A549 (cell line): ENCODE measurements at regions of chr6 and their contacts with region 1.

Region 1: DNA sequence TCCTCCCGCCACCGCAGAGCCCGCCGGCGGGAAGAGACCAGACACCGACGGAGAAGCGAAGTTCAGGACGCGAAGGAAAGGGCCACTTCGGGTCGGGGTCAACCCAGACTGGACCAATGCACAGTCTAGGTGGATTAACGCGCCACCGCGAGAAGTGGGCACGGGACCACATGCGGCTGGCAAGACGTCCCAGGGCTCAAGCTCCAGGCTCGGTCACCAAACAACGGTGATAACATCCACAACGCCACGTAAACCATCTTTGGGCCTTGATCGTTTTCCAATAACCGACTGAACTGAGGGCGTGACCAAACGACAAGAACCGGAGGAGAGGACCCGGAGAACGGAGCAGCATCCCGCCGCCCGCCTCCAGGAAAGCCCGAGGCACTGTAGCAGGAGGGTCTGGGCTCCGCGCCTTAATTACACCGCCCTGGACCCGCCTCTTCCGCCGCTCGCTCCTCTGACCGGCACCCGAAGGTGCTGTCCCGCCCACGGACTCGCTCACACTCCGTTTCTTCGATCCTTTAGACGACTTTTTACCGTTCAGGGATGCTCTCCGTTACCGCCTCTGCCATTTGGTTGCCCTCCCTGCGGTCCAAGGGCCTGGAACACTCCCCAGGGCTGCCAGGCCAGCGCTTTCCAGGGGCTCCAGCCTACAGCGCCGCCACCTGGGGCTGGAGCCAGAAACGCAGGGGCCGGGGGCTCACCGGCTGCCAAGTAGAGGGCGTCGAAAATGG is 44.1 kb downstream of the DPPA5 start:
- DNase-seq: peak; percentile 62 to 67
- ATAC-seq: peak; percentile 96 to 98
- H3K4me3 ChIP-seq: peak overlapping the region; percentile 67
- H3K27ac ChIP-seq: peak overlapping the region; percentile 89 to 96
- H3K4me1 ChIP-seq: peaks cover 7% of the 10 kb centered on the region; the same call in 1 of the 3 replicates
- CTCF ChIP-seq: peak; percentile 69
- EP300 ChIP-seq: no peak
- POLR2A ChIP-seq: peak; percentile 83
- RAD21 ChIP-seq: peak; percentile 10 to 42; a peak in 2 of 5 replicates

Region 2: DNA sequence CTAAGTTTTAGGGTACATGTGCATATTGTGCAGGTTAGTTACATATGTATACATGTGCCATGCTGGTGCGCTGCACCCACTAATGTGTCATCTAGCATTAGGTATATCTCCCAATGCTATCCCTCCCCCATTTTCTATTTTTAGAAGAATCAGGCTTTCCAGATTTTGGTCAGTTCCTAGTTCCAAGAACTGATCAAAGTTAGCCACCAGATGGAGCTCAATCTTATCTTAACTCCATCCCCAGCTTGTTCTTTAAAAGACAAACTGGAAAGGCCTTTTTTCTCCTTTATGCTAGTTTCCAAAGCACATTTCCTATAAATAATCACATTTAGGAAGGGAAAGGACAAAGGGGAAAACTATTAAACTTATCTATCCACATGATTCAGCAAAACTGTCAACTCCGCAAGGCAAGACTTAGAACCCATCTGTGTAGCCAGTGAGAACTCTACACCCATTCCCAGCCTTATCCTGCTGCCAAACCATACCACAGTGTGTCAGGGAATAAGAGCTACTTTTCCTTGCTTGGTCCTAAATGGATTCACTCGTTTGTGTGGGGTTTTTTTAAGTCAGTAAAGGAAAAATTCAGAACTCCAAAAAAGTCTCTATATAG is 24.2 kb before region 1 on chr6:
- CTCF ChIA-PET with region 1: interaction called, 10 read pairs
- POLR2A ChIA-PET with region 1: interaction called, 4 read pairs
- DNase-seq: peak; percentile 47 to 51
- ATAC-seq: peak; percentile 74 to 88; a peak in 5 of 6 replicates
- H3K4me3 ChIP-seq: no peak overlapping the region
- H3K27ac ChIP-seq: no peak overlapping the region
- H3K4me1 ChIP-seq: no peaks in the 10 kb centered on the region
- CTCF ChIP-seq: peak; percentile 41; the same call in 2 of the 3 replicates
- EP300 ChIP-seq: no peak
- POLR2A ChIP-seq: no peak
- RAD21 ChIP-seq: peak; percentile 28 to 46; a peak in 4 of 5 replicates

Region 3: DNA sequence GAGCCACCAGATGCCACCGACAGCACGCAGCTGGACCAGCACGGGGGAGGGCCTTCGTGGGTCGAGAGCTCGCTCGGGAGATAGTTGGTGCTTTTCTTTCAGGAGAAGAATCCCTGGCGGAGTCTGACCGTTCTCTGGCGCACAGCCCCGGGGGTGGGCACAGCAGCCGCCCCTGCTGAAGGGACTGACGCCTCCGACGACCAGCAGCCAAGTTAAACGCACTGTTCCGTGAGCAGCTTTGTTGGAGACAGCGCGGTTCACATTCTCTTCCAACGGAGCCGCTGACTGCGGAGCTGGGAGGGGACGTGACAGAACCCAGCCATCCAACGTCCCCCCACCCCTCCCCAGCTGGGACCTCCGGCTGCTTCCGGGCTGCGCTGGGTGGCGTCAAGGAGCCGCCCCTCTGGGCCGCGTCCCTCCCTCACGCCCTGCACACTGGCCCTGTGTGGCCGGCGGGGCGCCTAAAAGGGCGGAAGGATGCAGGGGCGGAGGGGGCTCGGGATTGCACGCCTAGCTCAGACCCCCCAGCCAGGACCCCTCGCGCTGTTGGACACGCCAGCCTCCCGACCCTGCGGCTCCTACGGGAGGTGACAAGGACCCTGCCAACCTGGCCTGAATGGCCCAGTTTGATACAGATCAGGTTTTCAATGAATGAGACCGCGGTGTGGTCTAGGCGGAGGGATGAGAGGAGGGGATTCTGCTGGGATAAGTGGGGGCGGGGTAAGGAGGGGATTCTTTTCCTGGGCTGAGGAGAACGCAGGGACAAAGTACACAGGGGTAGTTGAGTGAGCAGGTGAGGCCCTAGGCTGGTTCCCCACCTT is 10.6 kb before region 1 on chr6:
- CTCF ChIA-PET with region 1: no interaction called
- POLR2A ChIA-PET with region 1: no interaction called
- DNase-seq: no peak
- ATAC-seq: no peak
- H3K4me3 ChIP-seq: no peak overlapping the region
- H3K27ac ChIP-seq: no peak overlapping the region
- H3K4me1 ChIP-seq: no peaks in the 10 kb centered on the region
- CTCF ChIP-seq: no peak
- EP300 ChIP-seq: no peak
- POLR2A ChIP-seq: no peak
- RAD21 ChIP-seq: no peak